ENCODE measurements at regions of chr12 and their contacts with region 1.

Region 1: DNA sequence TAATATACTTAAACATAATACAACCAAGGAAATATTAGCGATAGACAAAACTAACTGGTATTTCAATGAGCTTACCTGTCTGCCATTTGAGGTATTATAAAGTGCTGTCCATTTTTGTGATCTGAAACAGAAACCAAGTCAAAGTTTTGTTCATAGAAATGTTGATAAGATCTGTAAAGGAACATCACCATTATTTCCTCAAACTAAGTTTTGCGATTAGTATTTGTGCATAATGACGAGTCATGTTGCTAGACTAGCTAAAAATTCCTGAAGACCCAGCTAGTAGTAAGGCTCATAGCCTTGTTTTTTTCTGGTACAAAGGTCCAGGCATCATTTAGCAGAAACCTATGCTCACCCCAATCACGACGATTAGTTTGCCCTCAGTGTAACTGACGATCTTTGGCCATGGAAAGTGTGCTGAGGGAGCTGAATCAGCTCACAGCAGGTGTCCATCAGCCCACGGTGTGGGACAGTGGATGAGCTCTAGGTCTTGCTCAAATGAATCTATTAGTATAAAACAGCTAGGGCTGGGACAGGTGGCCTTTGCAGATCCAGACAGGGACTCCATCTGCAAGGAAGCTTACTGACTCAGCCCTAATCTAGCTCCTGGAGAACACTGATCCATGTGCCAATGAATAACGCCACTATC is 28.7 kb downstream of the GIT2 start:
- DNase-seq: no peak
- H3K4me3 Mint-ChIP-seq: peak overlapping the region; percentile 21
- H3K27ac Mint-ChIP-seq: peak overlapping the region; percentile 79
- H3K4me1 Mint-ChIP-seq: peaks cover 16% of the 10 kb centered on the region
- H3K27me3 Mint-ChIP-seq: no peaks in the 10 kb centered on the region

Region 2: GRCh38 chr12:108047071-108047550 is 1920.4 kb before region 1 on chr12:
- intact Hi-C with region 1: no loop called
- DNase-seq: no peak
- H3K4me3 Mint-ChIP-seq: no peak overlapping the region
- H3K27ac Mint-ChIP-seq: no peak overlapping the region
- H3K4me1 Mint-ChIP-seq: no peaks in the 10 kb centered on the region
- H3K27me3 Mint-ChIP-seq: peaks cover 4% of the 10 kb centered on the region

Region 3: DNA sequence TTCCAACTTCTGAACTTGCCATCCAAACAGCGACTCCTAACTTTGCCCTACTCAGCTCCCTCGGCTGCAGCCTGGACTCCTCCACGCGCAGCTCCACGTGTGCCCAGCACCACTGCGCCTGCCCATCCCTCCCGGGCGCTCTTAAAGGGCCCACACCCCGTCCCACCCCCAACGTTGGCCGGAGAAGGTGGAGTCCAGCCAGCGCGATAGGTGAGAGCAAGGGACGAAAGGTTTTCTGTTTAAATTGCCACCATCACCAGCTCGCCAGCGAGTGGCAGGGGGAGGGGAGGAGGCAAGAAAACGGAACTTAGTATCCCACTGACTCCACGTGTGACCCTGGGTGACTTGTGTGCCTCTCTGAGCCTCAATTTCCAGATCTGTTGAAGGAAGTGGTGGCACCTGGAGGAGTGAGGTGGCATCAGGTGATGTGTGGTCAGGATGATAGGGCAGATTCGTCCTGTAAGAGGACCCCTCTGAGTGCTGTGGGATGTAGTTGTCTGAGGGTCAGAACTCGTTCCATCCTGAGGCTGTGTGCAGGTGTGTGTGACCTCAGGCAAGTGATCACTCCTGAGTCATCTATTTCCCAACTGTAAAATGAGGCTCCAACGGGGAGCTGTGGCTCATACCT is 194.0 kb before region 1 on chr12:
- intact Hi-C with region 1: no loop called
- DNase-seq: no peak
- H3K4me3 Mint-ChIP-seq: no peak overlapping the region
- H3K27ac Mint-ChIP-seq: no peak overlapping the region
- H3K4me1 Mint-ChIP-seq: peaks cover 5% of the 10 kb centered on the region
- H3K27me3 Mint-ChIP-seq: peaks cover 8% of the 10 kb centered on the region

Region 4: GRCh38 chr12:109899783-109900751 is 67.4 kb before region 1 on chr12 and contains the start of gene TCHP:
- intact Hi-C with region 1: no loop called
- DNase-seq: peak; percentile 69
- H3K4me3 Mint-ChIP-seq: peak within 1 kb of the TSS; percentile 95
- H3K27ac Mint-ChIP-seq: peak within 1 kb of the TSS; percentile 94
- H3K4me1 Mint-ChIP-seq: peaks cover 19% of the 10 kb centered on the region
- H3K27me3 Mint-ChIP-seq: no peaks in the 10 kb centered on the region
- total RNA-seq, gene TCHP: 30.4 and 31.1 TPM in 2 replicates

Region 5: GRCh38 chr12:109982210-109982609 is 14.7 kb after region 1 on chr12:
- intact Hi-C with region 1: loop called (anchors 2 kb)
- DNase-seq: no peak
- H3K4me3 Mint-ChIP-seq: peak overlapping the region; percentile 16
- H3K27ac Mint-ChIP-seq: peak overlapping the region; percentile 74
- H3K4me1 Mint-ChIP-seq: peaks cover 51% of the 10 kb centered on the region
- H3K27me3 Mint-ChIP-seq: no peaks in the 10 kb centered on the region